BJ (cell line): ENCODE measurements at regions of chr9 and their contacts with region 1.

Region 1: DNA sequence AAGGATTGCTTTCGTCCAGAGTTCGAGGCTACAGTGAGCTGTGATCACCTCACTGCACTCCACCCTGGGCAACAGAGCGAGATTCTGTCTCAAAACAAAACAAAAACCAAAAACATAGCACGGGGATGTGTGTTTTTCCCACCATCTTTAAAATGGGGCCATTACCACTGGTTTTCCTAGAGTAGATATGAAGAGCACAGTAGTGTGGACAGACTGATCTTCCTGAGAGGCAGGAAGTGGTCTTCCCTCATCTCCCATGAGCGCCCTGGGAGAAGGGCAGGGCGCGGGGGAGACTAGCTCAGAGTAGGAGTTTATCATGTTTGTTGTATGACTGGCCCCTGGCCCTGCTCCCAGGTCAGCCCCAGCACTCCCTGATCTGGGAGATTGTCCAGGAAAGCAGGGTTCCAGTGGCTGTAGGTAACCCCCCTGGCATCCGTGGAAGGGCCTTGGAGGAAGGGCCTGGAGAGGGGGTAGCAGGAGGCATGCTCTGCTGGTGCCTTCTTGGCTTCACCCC is 2.3 kb downstream of the SUSD3 start:
- DNase-seq: no peak
- H3K4me3 ChIP-seq: no peak overlapping the region
- H3K27me3 ChIP-seq: no peaks in the 10 kb centered on the region
- CTCF ChIP-seq: no peak

Region 2: DNA sequence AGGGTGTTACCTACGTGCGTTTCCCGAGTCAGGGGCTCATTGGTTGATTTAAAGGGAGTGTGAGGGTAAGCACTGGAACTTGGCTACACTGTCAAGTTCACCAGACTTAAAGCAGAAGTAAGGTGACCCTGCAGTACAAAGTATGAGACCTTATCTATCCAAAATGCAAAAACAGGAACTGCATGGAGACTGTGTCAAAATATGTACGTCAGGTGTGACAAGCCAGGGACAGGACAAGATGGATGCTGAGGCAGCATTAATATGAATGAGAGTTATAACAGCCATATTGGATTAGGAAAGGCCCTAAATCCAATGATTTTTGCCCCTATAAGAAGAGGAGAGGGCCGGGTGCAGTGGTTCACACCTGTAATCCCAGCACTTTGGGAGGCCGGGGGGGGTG is 17.7 kb before region 1 on chr9:
- CTCF ChIA-PET with region 1: no interaction called
- POLR2A ChIA-PET with region 1: interaction called, 12 read pairs
- DNase-seq: no peak
- H3K4me3 ChIP-seq: no peak overlapping the region
- H3K27me3 ChIP-seq: no peaks in the 10 kb centered on the region
- CTCF ChIP-seq: no peak